Psoas muscle (tissue), 8 donors: ENCODE measurements at regions of chr6 and their contacts with region 1.

Region 1: DNA sequence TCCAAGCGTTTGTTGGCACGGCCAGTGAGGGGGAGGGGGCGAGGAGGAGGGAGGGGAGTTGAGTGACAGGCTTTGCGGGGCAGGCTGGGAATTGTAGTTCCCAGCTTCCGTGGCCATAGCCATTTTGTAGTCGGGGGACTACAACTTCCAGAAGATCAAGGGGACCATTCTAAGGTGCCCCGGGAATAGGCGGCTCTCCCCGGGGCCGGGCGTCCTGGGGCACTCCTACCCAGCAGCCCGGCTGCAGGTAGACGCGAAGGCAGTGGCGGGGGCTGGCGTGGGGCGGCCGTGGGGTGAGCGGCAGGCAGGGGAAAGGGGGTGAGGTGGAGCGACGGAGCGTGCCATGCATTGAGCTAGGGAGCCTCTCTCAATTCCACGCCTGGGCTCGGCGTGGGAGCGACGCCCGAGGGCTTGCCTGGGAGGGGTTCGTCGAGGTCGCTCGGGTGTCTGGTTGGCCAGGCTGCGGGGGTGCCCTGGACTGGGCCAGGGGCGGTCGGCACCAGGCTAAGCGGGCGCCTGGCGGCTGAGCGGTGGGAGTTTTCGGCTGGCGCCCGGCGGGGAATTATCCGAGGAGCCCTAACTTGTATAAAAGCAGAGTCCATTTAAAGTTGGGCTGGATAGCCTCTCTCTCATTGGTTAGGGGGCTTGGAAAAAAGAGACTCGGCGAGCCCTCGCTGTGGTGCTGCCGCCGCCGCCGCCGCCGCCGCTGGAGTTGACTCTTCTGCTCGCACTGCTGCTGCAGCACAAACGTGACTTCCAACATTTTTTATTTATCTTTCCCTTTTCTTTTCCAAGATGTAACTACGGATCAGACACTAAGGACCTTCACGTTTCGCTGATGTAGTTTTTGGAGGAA is at the start of gene JARID2:
- DNase-seq: peak; percentile 100
- ATAC-seq: peak; percentile 84 to 89 (median 87)
- H3K4me3 ChIP-seq: peak within 1 kb of the TSS; percentile 88
- H3K27ac ChIP-seq: peak within 1 kb of the TSS; percentile 98
- H3K4me1 ChIP-seq: peaks cover 4% of the 10 kb centered on the region
- H3K27me3 ChIP-seq: no peaks in the 10 kb centered on the region
- CTCF ChIP-seq: no peak
- total RNA-seq, gene JARID2: 2.8 to 16.1 (median 7.2) TPM

Region 2: GRCh38 chr6:14210663-14211561 is 1034.7 kb before region 1 on chr6:
- intact Hi-C with region 1: loop called (anchors 2 to 10 kb)
- DNase-seq: peak; percentile 95 to 96
- ATAC-seq: peak; percentile 95 to 97 (median 96)
- H3K4me3 ChIP-seq: peak overlapping the region; percentile 82
- H3K27ac ChIP-seq: peak overlapping the region; percentile 89
- H3K4me1 ChIP-seq: peaks cover 11% of the 10 kb centered on the region
- H3K27me3 ChIP-seq: no peaks in the 10 kb centered on the region
- CTCF ChIP-seq: peak; percentile 93

Region 3: DNA sequence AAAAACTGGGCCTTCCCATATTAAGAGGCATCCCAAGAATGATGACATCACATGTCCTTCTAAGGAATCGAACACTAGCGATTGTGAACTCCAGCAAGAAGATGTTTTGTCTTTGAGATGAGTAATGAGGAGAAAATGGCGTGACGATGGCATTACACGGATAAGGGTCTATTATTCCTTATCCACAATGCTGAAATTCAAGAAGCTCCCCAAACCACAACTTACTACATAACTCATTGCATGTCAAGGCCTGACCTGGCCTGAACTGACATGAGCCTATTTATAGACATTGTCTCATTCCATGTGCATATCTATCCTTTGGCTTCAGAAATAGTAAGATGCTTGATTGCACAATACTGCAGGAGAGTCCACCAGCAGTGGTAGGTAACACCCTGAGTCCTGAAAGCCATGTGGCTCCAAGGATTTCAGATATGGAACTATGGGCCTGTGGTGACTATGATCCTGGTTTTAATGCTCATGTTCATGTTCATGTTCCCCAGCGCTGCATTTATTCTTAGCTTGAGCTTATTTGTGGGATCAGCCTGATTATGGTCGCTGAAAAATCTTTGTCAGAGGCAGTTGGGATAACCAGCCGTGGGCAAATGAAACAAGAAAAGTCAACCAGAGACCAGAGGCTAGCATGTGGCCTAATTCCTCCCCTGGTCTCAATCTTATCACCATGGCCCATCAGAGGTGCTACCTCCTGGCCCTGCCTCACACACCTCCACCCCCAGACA is 182.9 kb before region 1 on chr6:
- intact Hi-C with region 1: loop called in 1 of 2 experiments (anchors 2 kb)
- DNase-seq: no peak
- ATAC-seq: peak; percentile 87 to 95 (median 89)
- H3K4me3 ChIP-seq: no peak overlapping the region
- H3K27ac ChIP-seq: peak overlapping the region; percentile 86
- H3K4me1 ChIP-seq: peaks cover 12% of the 10 kb centered on the region
- H3K27me3 ChIP-seq: no peaks in the 10 kb centered on the region
- CTCF ChIP-seq: no peak

Region 4: DNA sequence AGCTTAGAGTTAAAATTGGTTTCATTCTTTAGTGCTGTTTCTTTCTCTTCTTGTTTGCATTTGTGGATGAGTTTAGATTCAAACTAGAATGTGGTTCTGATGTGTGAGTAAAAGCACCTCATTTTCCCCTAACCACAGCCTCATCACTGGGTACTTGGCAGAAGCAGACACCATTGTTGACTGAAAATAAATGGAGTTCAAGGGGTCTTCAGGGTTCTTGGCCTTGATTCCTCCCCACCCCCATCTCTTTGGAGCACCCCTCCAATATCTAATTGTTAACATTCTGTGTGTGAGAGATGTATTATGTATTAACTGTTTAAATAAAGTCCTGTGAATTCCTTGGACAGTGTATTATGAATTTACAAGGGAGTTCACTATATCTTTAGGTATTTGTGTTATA is 59.9 kb after region 1 on chr6:
- intact Hi-C with region 1: no loop called
- DNase-seq: no peak
- ATAC-seq: no peak
- H3K4me3 ChIP-seq: no peak overlapping the region
- H3K27ac ChIP-seq: no peak overlapping the region
- H3K4me1 ChIP-seq: peaks cover 64% of the 10 kb centered on the region
- H3K27me3 ChIP-seq: no peaks in the 10 kb centered on the region
- CTCF ChIP-seq: no peak

Region 5: GRCh38 chr6:15389765-15390723 is 144.5 kb after region 1 on chr6:
- intact Hi-C with region 1: loop called in 1 of 2 experiments (anchors 5 kb)
- DNase-seq: peak in 1 of 2 donors; percentile 58
- ATAC-seq: peak; percentile 40 to 69 (median 59)
- H3K4me3 ChIP-seq: no peak overlapping the region
- H3K27ac ChIP-seq: peak overlapping the region; percentile 38
- H3K4me1 ChIP-seq: peaks cover 62% of the 10 kb centered on the region
- H3K27me3 ChIP-seq: no peaks in the 10 kb centered on the region
- CTCF ChIP-seq: peak; percentile 58

Region 6: GRCh38 chr6:15479761-15480160 is 234.2 kb after region 1 on chr6:
- intact Hi-C with region 1: loop called (anchors 5 to 10 kb)
- DNase-seq: no peak
- ATAC-seq: peak in 3 of 4 donors; percentile 25 to 45 (median 35)
- H3K4me3 ChIP-seq: no peak overlapping the region
- H3K27ac ChIP-seq: peak overlapping the region; percentile 81
- H3K4me1 ChIP-seq: peaks cover 71% of the 10 kb centered on the region
- H3K27me3 ChIP-seq: no peaks in the 10 kb centered on the region
- CTCF ChIP-seq: no peak